Dorsolateral prefrontal cortex (tissue), 120 donors: ENCODE measurements at regions of chr3 and their contacts with region 1.

Region 1: GRCh38 chr3:127959846-127960245 is 44.8 kb downstream of the KBTBD12 start:
- DNase-seq: peak in 1 of 10 donors; percentile 23
- H3K4me3 ChIP-seq: no peak overlapping the region
- H3K27ac ChIP-seq: peak overlapping the region in 3 of 59 donors; percentile 1 to 35 (median 18)
- H3K27me3 ChIP-seq: no peaks in the 10 kb centered on the region
- CTCF ChIP-seq: peak in 51 of 56 donors; percentile 14 to 59 (median 38)

Region 2: GRCh38 chr3:127667119-127667681 is 292.6 kb before region 1 on chr3:
- intact Hi-C with region 1: loop called in 1 of 2 experiments (anchors 10 kb)
- DNase-seq: peak in 6 of 10 donors; percentile 46 to 73 (median 63)
- H3K4me3 ChIP-seq: no peak overlapping the region
- H3K27ac ChIP-seq: peak overlapping the region in 51 of 59 donors; percentile 18 to 93 (median 64)
- H3K27me3 ChIP-seq: no peaks in the 10 kb centered on the region
- CTCF ChIP-seq: no peak

Region 3: DNA sequence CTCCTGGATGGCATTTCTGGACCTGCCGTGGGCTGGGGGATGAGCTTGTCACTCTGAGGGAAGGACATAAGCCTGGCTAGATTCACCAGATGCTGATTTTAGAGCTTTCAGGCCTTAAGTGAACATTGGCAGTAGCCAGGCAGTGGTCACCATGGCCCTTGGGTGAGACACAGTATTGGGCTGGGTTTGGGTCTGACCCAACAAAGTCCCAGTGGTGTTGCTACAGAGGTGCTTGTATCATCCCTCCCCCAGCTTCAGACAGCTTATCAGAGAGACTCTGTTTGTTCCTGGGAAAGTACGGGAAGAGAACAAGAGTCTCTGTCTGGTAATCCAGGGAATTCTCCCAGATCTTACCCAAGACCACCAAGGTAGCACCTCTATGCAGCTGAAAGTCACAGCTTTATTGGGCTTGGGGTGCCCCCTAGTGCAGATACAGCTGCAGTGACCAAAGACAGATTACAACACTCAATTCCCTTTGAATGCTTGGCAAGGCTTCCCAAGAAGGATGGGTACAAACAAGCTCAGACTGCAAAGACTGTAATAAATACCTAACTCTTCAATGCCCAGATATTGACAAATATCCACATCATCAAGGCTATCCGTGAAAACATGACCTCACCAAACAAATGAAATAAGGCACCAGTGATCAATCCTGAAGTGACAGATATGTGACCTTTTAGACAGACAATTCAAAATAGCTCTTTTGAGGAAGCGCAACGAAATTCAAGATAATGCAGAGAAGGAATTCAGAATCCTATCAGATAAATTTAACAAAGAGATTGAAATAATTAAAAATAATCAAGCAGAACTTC is 173.6 kb after region 1 on chr3:
- intact Hi-C with region 1: no loop called
- DNase-seq: no peak
- H3K4me3 ChIP-seq: no peak overlapping the region
- H3K27ac ChIP-seq: no peak overlapping the region
- H3K27me3 ChIP-seq: peaks cover 0 to 3% (median 0%) of the 10 kb centered on the region in 45 donors
- CTCF ChIP-seq: peak in 40 of 56 donors; percentile 6 to 51 (median 28)